ENCODE measurements at regions of chrX and their contacts with region 1.

Region 1: GRCh38 chrX:153667956-153668396 is 5.6 kb downstream of the PNCK start:
- DNase-seq: peak; percentile 85
- H3K4me3 Mint-ChIP-seq: peak overlapping the region; percentile 67
- H3K27ac Mint-ChIP-seq: no peak overlapping the region
- H3K4me1 Mint-ChIP-seq: peaks cover 7% of the 10 kb centered on the region
- H3K27me3 Mint-ChIP-seq: peaks cover 58% of the 10 kb centered on the region

Region 2: DNA sequence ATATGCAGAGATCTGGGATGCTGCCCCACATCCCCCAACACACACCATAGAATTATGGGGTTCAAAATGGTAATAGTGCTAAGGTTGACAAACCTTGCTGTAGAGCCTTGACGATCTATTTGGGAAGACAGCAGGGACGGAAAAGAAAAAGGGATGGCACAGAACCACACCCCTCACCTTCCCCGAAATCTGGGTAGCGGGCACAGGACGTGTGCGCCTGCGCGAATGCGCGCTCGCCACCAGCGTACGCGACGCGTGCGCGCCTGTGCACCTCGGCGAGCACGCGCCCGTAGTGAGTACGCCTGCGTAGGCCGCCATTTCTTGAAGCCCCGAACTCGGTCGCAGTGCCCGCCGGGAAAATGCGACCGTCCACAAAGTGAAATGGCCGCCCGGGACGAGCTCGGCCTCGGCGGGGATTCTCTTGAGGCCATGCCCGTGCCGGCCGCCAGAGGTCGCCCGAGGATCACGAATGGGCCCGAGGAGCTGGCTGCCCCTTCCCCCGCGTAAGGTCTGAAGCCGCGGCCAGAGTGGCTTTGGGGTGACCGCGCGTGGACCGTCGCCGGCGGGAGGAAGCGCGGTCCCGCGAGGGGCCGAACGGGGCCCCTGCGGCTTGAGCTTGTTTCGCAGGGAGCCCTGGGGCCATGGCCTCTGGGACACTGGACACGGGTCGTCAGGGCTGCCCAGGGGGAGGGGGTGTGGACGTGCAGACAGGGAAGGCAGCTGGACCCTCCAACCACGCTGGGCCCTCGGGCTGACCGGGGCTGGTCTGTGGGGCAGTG is 726.5 kb before region 1 on chrX:
- CTCF ChIA-PET with region 1: interaction called, 11 read pairs
- DNase-seq: peak; percentile 91
- H3K4me3 Mint-ChIP-seq: peak overlapping the region; percentile 79
- H3K27ac Mint-ChIP-seq: peak overlapping the region; percentile 82
- H3K4me1 Mint-ChIP-seq: peaks cover 16% of the 10 kb centered on the region
- H3K27me3 Mint-ChIP-seq: peaks cover 10% of the 10 kb centered on the region

Region 3: GRCh38 chrX:153554519-153555167 is 113.3 kb before region 1 on chrX:
- CTCF ChIA-PET with region 1: interaction called, 27 read pairs
- DNase-seq: peak; percentile 73
- H3K4me3 Mint-ChIP-seq: no peak overlapping the region
- H3K27ac Mint-ChIP-seq: no peak overlapping the region
- H3K4me1 Mint-ChIP-seq: no peaks in the 10 kb centered on the region
- H3K27me3 Mint-ChIP-seq: peaks cover 23% of the 10 kb centered on the region

Region 4: DNA sequence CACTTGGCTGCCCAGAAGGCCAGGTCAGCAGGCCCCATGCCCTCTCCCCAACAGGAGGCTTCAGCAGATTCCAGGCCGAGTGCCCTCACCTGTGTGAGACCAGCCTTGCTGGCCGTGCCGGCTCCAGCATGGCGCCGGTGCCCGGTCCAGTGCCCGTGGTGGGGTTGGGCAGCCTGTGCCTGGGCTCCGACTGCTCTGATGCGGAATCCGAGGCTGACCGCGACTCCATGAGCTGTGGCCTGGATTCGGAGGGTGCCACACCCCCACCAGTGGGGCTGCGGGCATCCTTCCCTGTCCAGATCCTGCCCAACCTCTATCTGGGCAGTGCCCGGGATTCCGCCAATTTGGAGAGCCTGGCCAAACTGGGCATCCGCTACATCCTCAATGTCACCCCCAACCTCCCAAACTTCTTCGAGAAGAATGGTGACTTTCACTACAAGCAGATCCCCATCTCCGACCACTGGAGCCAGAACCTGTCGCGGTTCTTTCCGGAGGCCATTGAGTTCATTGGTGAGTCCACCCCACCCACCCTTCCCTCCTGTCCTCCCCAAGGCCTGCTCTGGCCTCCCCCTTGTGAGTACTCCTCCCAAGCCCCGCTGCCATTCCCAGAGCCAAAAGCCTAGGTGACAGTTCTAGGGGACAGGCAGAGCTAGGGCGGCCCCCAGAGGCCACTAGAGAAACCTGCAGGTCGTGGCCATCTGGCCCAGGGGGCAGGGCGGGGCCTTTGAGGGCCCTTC is 18.6 kb before region 1 on chrX:
- CTCF ChIA-PET with region 1: interaction called, 13 read pairs
- DNase-seq: peak; percentile 48
- H3K4me3 Mint-ChIP-seq: no peak overlapping the region
- H3K27ac Mint-ChIP-seq: no peak overlapping the region
- H3K4me1 Mint-ChIP-seq: peaks cover 2% of the 10 kb centered on the region
- H3K27me3 Mint-ChIP-seq: peaks cover 71% of the 10 kb centered on the region

Region 5: GRCh38 chrX:153684467-153685155 is 16.6 kb after region 1 on chrX:
- CTCF ChIA-PET with region 1: interaction called, 12 read pairs
- DNase-seq: no peak
- H3K4me3 Mint-ChIP-seq: no peak overlapping the region
- H3K27ac Mint-ChIP-seq: no peak overlapping the region
- H3K4me1 Mint-ChIP-seq: peaks cover 2% of the 10 kb centered on the region
- H3K27me3 Mint-ChIP-seq: peaks cover 60% of the 10 kb centered on the region